ENCODE measurements at regions of chr13 and their contacts with region 1.

Region 1: GRCh38 chr13:33690354-33690753 is 127.6 kb upstream of the RFC3 start:
- DNase-seq: no peak
- H3K4me3 ChIP-seq: no peak overlapping the region
- H3K27ac ChIP-seq: no peak overlapping the region
- H3K4me1 ChIP-seq: no peaks in the 10 kb centered on the region
- H3K27me3 ChIP-seq: no peaks in the 10 kb centered on the region
- CTCF ChIP-seq: no peak
- EP300 ChIP-seq: no peak
- POLR2A ChIP-seq: no peak

Region 2: DNA sequence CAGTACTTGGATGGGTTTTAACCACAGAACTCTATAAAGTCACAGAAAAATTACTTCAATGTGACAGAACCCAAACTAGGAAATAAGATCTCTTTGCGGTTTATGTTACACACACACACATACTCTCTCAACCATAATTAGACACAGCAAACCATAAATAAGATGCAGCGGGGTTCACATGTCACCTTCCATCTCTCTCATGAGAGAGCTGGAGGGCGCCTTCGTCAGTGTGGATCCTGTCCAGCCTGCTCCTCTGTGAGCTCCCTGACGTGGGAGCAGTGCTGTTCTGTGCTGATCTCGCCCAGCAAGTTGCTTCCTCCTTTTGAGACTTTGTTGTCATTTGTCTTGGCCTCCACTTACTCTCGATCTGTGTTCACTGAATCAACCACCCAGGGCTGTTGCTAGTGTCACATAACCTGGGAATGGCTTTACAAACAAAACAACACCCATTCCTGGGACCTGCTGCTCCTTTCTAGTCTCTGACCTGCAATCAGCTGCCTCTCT is 879.0 kb before region 1 on chr13:
- in situ Hi-C with region 1: no loop called
- intact Hi-C with region 1: loop called (anchors 5 kb)
- DNase-seq: peak; percentile 30
- H3K4me3 ChIP-seq: no peak overlapping the region
- H3K27ac ChIP-seq: no peak overlapping the region
- H3K4me1 ChIP-seq: peaks cover 0 to 14% (median 0%) of the 10 kb centered on the region in 4 donors
- H3K27me3 ChIP-seq: no peaks in the 10 kb centered on the region
- CTCF ChIP-seq: no peak
- EP300 ChIP-seq: no peak
- POLR2A ChIP-seq: no peak